Prostate gland (tissue), 2 donors: ENCODE measurements at regions of chr14 and their contacts with region 1.

Region 1: GRCh38 chr14:89701211-89702043 is 253.1 kb downstream of the EFCAB11 start:
- DNase-seq: peak; percentile 68
- H3K4me3 ChIP-seq: peak overlapping the region; percentile 37 to 53
- H3K27ac ChIP-seq: no peak overlapping the region
- H3K4me1 ChIP-seq: no peaks in the 10 kb centered on the region
- H3K27me3 ChIP-seq: no peaks in the 10 kb centered on the region
- CTCF ChIP-seq: no peak
- POLR2A ChIP-seq: no peak

Region 2: DNA sequence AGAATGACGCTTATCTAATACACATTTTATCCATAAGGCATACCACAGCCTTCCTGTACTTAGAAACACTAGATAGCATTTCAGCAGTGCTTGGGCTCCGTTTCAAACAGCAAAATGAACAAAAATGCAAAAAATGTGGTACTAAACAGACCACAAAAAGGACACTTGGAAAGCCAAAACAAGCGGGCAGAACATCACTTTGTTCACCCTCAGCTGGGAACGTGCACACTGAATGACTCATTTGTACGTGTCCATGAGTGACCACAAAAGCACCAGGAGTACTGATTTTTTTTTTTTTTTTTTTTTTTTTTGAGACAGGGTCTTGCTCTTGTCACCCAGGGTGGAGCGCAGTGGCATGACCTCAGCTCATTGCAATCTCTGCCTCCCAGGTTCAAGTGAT is 275.5 kb before region 1 on chr14:
- intact Hi-C with region 1: loop called (anchors 10 kb)
- DNase-seq: no peak
- H3K4me3 ChIP-seq: no peak overlapping the region
- H3K27ac ChIP-seq: no peak overlapping the region
- H3K4me1 ChIP-seq: peaks cover 6% of the 10 kb centered on the region
- H3K27me3 ChIP-seq: no peaks in the 10 kb centered on the region
- CTCF ChIP-seq: no peak
- POLR2A ChIP-seq: no peak

Region 3: DNA sequence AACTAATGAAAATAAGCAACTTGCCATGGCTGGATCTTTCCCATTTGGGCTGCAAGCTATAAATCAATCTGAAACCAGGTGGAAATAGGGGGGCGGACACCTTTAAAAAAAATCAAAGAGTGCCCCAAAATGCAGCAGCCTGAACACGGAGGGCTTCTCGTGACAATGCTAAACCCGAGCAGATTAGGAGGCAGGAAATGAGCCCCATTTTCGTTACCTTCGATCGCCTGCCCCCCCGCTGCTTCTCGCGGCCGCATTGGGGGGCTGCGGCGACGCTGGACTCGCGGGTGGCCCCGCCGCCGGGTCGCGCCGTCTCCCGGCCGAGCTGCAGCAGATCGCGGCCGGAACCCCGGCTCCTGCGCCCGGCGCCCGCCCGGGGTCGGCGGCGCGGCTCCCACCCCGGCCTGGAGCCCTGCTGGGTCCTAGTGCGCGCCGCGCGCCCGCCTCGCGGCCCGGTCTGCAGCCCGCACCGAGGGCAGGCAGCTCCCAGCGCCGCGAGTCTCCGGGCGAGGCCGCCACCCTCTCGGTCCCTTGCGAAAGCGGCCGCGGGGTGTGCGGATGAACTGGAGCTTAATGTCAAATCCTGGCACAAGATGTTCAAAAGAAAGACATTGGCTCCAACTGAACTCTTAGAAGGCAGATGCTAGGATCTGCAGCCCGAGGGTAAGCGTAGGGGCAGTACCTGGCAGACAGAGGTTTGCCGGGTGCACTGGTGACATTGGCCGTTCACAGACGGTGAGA is 82.4 kb before region 1 on chr14:
- intact Hi-C with region 1: loop called (anchors 5 kb)
- DNase-seq: peak; percentile 12
- H3K4me3 ChIP-seq: peak overlapping the region; percentile 46 to 58
- H3K27ac ChIP-seq: peak overlapping the region; percentile 27 to 32
- H3K4me1 ChIP-seq: no peaks in the 10 kb centered on the region
- H3K27me3 ChIP-seq: no peaks in the 10 kb centered on the region
- CTCF ChIP-seq: no peak
- POLR2A ChIP-seq: no peak

Region 4: GRCh38 chr14:89926717-89927116 is 225.3 kb after region 1 on chr14:
- intact Hi-C with region 1: no loop called
- DNase-seq: no peak
- H3K4me3 ChIP-seq: no peak overlapping the region
- H3K27ac ChIP-seq: no peak overlapping the region
- H3K4me1 ChIP-seq: no peaks in the 10 kb centered on the region
- H3K27me3 ChIP-seq: no peaks in the 10 kb centered on the region
- CTCF ChIP-seq: no peak
- POLR2A ChIP-seq: no peak